Right cardiac atrium (tissue), 5 donors: ENCODE measurements at regions of chr19 and their contacts with region 1.

Region 1: DNA sequence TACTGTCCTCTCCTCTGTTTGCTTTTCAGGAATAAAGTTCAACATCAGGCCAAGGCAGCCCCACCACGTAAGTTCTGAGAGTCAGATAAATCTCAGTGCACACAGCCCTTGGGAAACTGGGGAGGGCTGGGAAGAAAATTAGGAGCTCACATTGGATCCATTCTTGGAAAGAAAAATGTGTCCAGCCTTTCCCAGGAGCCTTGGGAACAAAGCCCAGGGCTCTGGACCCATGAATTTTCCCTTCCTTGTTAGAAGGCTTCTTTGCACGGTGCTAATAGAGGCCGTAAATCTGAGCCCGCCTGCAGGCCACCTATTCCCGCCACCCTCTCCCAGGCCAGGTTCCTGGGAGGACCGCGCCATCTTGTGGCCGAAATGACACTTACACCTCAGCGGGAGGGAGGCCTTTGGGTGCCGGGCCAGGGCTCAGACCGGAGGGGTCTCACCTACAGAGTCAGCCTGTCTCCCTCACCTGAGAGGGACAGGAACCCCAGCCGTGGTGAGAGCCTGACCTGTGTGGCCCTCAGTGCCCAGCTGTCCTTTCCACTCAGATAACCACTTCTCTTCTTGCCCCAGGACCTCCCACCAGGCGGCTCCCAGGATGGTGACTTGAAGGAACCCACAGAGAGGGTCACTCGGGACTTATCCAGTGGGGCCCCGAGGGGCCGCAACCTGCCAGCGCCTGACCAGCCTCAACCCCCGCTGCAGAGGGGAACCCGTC is 25.1 kb upstream of the KCTD15 start:
- DNase-seq: peak; percentile 69 to 89 (median 87)
- ATAC-seq: peak; percentile 47 to 76
- H3K4me3 ChIP-seq: no peak overlapping the region
- H3K27ac ChIP-seq: no peak overlapping the region
- H3K4me1 ChIP-seq: no peaks in the 10 kb centered on the region
- H3K27me3 ChIP-seq: no peaks in the 10 kb centered on the region

Region 2: DNA sequence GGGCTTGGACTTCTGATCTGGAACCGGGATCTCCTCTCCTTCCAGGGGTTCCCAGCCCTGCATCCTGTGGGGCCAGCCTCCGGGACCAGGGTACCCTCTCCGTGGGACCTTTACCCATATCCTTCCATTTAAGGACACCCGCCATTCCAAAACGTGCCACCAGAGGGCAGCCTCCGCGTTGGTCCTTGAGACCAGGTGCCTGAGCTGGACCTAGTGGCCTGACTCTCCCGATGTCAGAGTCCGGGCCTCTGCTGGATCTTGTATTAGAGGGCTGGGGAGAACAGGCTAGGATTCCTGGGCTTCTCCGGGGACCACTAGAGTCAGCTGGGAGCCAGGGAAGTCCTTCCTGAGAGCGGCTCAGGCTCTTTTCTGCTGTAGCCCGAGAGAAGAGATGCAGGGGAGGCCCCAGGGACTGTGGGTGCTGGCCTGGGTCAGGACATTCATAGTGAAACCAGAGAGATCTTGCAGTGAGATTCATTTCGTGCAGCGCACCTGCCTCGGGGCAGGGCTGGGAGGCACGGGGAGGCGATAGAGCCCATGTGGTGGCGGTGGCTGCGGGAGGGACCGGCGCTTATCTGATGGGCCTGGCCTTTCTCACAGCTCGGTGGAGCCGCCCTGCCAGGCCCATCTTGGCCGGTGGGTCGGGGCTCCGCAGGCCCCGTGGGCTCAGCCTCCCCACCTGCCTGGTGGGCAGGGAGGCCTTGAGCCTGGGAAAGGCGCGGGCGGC is 536.1 kb before region 1 on chr19:
- intact Hi-C with region 1: loop called in 3 of 4 experiments (anchors 5 to 10 kb)
- DNase-seq: peak; percentile 76 to 93 (median 91)
- ATAC-seq: peak; percentile 62 to 71
- H3K4me3 ChIP-seq: no peak overlapping the region
- H3K27ac ChIP-seq: no peak overlapping the region
- H3K4me1 ChIP-seq: no peaks in the 10 kb centered on the region
- H3K27me3 ChIP-seq: no peaks in the 10 kb centered on the region

Region 3: DNA sequence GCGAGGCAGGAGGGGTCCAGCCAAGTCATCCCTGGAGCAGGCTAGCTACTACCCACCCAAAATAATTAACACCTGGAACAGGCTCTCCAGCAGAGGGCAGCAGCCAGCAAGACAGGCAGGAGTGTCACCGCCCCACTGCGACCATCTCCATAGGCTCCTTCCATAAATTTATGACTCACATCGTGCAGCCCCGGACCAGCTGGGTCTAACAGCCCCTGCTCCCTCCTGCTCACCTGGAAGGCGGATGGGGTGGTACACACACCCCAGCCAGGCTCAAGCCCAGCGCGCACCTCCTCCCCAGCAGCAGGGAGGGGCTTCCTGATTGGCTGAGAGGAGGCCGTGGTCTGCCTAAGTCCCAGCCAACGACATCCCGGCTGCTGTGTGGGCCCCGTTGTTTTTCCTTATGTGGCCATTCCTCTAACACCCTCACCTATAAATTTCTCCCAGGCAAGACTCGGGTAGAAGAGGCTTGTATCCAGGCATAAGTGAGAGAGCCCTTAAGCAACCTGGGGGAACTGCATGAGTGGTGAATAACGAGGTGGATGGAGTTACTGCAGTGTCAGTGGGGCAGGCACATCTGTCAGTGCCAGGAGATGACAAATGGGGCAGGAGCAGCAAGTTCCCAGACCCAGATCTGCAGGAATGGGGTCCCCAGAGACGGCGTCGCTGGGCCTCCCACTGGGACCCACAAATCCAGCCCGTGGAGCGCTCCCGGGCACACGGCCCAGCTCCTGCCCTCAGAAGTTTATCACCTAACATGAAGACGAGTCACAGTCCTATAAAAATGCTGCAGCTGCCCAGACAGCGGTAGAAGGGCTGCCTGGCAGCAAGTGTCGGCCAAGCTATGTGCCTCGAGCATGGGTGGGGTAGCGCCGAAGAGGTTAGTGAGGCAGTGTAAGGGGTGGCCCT is 355.0 kb before region 1 on chr19:
- intact Hi-C with region 1: loop called in 2 of 4 experiments (anchors 5 kb)
- DNase-seq: peak; percentile 58 to 83 (median 81)
- ATAC-seq: peak; percentile 4 to 60
- H3K4me3 ChIP-seq: no peak overlapping the region
- H3K27ac ChIP-seq: no peak overlapping the region
- H3K4me1 ChIP-seq: no peaks in the 10 kb centered on the region
- H3K27me3 ChIP-seq: no peaks in the 10 kb centered on the region

Region 4: DNA sequence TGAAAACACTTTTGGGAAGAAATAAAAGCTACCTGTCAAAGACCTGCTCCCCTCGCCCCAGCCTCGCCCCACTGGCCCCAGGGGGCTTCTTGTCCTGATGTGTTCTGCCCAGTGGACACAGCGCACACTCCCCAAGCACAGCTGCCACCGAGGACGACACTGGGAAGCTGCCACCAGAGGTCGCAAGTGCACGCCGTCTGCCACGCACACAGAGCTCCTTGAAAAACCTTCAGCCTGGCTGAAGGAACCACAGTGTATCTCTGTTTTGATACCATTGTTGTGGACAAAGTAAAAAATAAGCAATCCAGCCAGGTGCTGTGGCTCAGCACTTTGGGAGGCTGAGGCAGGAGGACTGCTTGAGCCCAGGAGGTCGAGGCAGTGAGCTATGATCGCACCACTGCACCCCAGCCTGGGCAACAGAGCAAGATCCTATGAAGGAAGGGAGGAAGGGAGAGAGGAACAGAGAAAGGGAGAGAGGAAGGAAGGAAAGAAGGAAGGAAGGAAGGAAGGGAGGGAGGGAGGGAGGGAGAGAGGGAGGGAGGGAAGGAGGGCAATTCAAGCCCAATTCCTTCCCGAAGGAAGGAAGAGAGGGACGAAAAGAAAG is 340.8 kb before region 1 on chr19:
- intact Hi-C with region 1: loop called in 3 of 4 experiments (anchors 2 to 5 kb)
- DNase-seq: peak; percentile 60 to 88 (median 86)
- ATAC-seq: peak; percentile 61 to 77
- H3K4me3 ChIP-seq: no peak overlapping the region
- H3K27ac ChIP-seq: no peak overlapping the region
- H3K4me1 ChIP-seq: no peaks in the 10 kb centered on the region
- H3K27me3 ChIP-seq: no peaks in the 10 kb centered on the region

Region 5: DNA sequence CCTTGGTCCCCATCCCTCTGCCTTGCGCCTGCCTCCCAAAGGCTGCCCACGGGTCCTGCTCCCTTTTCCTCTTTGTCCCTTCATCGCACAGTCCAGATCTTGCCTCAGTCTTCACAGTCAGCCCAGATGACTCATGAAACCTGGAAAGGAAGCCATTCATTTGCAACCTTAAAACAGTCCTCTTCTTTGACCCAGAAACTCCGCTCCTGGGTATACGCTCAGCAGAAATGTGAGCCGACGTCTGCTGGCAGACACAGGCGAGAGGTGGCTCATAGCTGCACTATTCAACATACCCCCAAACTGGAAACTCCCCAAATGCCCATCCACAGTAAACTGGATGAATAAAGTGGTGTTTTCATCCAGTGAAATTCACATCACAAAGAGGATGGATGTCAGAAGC is 236.3 kb before region 1 on chr19:
- intact Hi-C with region 1: no loop called
- DNase-seq: peak in 1 of 3 donors; percentile 13
- ATAC-seq: no peak
- H3K4me3 ChIP-seq: no peak overlapping the region
- H3K27ac ChIP-seq: no peak overlapping the region
- H3K4me1 ChIP-seq: no peaks in the 10 kb centered on the region
- H3K27me3 ChIP-seq: no peaks in the 10 kb centered on the region

Region 6: GRCh38 chr19:34096020-34096915 is 324.7 kb after region 1 on chr19:
- intact Hi-C with region 1: loop called in 3 of 4 experiments (anchors 2 to 10 kb)
- DNase-seq: no peak
- ATAC-seq: peak; percentile 33 to 64
- H3K4me3 ChIP-seq: peak overlapping the region; percentile 2
- H3K27ac ChIP-seq: no peak overlapping the region
- H3K4me1 ChIP-seq: no peaks in the 10 kb centered on the region
- H3K27me3 ChIP-seq: no peaks in the 10 kb centered on the region